Psoas muscle (tissue), 8 donors: ENCODE measurements at regions of chr21 and their contacts with region 1.

Region 1: GRCh38 chr21:39088831-39089380 is 94.3 kb downstream of the PSMG1 start:
- DNase-seq: peak in 1 of 2 donors; percentile 39
- ATAC-seq: peak; percentile 26 to 53 (median 42)
- H3K4me3 ChIP-seq: peak overlapping the region; percentile 66
- H3K27ac ChIP-seq: peak overlapping the region; percentile 97
- H3K4me1 ChIP-seq: peaks cover 27% of the 10 kb centered on the region
- H3K27me3 ChIP-seq: no peaks in the 10 kb centered on the region
- CTCF ChIP-seq: no peak

Region 2: GRCh38 chr21:38913120-38913892 is 175.6 kb before region 1 on chr21:
- intact Hi-C with region 1: loop called (anchors 5 to 10 kb)
- DNase-seq: peak; percentile 83 to 89
- ATAC-seq: peak; percentile 72 to 87 (median 81)
- H3K4me3 ChIP-seq: peak overlapping the region; percentile 48
- H3K27ac ChIP-seq: peak overlapping the region; percentile 94
- H3K4me1 ChIP-seq: peaks cover 51% of the 10 kb centered on the region
- H3K27me3 ChIP-seq: no peaks in the 10 kb centered on the region
- CTCF ChIP-seq: no peak

Region 3: DNA sequence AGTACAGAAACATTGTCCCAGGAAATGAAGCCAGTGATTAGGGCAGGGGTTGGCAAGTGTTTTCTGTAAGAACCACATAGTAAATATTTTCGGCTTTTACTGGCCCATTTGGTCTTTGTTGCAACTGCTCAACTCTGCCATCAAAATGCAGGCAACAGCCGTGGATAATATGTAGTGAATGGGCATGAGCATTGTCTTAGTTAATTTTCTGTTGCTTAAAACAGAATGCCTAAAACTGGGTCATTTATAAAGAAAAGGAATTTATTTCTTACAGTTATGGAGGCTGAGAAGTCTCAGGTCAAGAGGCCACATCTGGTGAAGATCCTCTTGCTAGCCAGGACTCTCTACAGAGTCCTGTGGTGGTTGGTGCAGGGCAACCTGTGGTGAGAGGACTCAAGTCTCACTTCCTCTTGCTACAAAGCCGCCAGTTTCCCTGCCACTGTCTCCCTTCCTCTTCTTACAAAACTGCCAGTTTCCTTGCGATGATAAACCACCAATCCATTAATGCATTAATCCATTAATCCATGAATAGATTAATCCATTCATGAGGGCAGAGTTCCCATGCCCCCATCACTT is 72.1 kb before region 1 on chr21:
- intact Hi-C with region 1: no loop called
- DNase-seq: no peak
- ATAC-seq: no peak
- H3K4me3 ChIP-seq: no peak overlapping the region
- H3K27ac ChIP-seq: no peak overlapping the region
- H3K4me1 ChIP-seq: no peaks in the 10 kb centered on the region
- H3K27me3 ChIP-seq: no peaks in the 10 kb centered on the region
- CTCF ChIP-seq: no peak

Region 4: GRCh38 chr21:39125752-39126485 is 37.0 kb after region 1 on chr21:
- intact Hi-C with region 1: loop called in 1 of 2 experiments (anchors 2 kb)
- DNase-seq: peak in 1 of 2 donors; percentile 63
- ATAC-seq: peak; percentile 83 to 95 (median 94)
- H3K4me3 ChIP-seq: no peak overlapping the region
- H3K27ac ChIP-seq: peak overlapping the region; percentile 38
- H3K4me1 ChIP-seq: peaks cover 13% of the 10 kb centered on the region
- H3K27me3 ChIP-seq: no peaks in the 10 kb centered on the region
- CTCF ChIP-seq: peak; percentile 60